ENCODE measurements at regions of chr14 and their contacts with region 1.

Region 1: GRCh38 chr14:90399541-90400444 is 3.0 kb downstream of the CALM1 start:
- DNase-seq: peak; percentile 93 to 98
- ATAC-seq: peak; percentile 73 to 79
- H3K4me3 ChIP-seq: peak overlapping the region; percentile 88; the same call in 1 of the 3 replicates
- H3K27ac ChIP-seq: peak overlapping the region in 1 of 2 experiments; percentile 18; a peak in 1 of 6 replicates
- H3K4me1 ChIP-seq: peaks cover 31% of the 10 kb centered on the region
- CTCF ChIP-seq: peak; percentile 99
- EP300 ChIP-seq: no peak
- POLR2A ChIP-seq: no peak
- RAD21 ChIP-seq: peak; percentile 88 to 89

Region 2: DNA sequence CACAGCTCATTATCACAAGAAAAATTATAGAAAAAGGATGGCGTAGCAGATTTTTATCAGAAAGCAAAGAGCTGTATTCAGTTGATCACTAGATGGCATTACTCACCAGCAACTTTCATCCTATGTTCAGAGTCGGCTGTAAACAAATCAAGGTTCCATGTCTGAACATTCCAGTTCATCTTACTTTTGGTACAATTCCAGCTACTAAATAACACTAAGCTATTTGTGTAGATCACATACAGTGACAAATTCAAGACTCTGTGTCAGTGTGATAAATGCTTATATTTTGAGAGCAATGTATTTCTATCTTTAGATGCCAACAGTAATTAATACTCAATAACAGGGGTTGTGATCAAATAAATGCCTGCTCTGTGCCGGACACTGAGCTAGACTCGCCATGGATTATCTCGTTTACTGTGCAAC is 98.1 kb before region 1 on chr14:
- CTCF ChIA-PET with region 1: interaction called, 7 read pairs
- POLR2A ChIA-PET with region 1: interaction called, 12 read pairs
- DNase-seq: peak; percentile 38 to 62
- ATAC-seq: peak; percentile 72 to 84; a peak in 4 of 6 replicates
- H3K4me3 ChIP-seq: no peak overlapping the region
- H3K27ac ChIP-seq: no peak overlapping the region
- H3K4me1 ChIP-seq: no peaks in the 10 kb centered on the region
- CTCF ChIP-seq: peak; percentile 66
- EP300 ChIP-seq: no peak
- POLR2A ChIP-seq: no peak
- RAD21 ChIP-seq: peak; percentile 71 to 79

Region 3: GRCh38 chr14:90383075-90383730 is 16.6 kb before region 1 on chr14:
- CTCF ChIA-PET with region 1: interaction called, 6 read pairs
- POLR2A ChIA-PET with region 1: interaction called, 69 read pairs
- DNase-seq: peak; percentile 97 to 100
- ATAC-seq: peak; percentile 97 to 98
- H3K4me3 ChIP-seq: peak overlapping the region; percentile 68
- H3K27ac ChIP-seq: peak overlapping the region; percentile 96 to 97
- H3K4me1 ChIP-seq: peaks cover 16% of the 10 kb centered on the region
- CTCF ChIP-seq: no peak; the same call in 2 of the 3 replicates
- EP300 ChIP-seq: no peak
- POLR2A ChIP-seq: peak; percentile 85
- RAD21 ChIP-seq: no peak; a peak in 1 of 5 replicates

Region 4: GRCh38 chr14:90388437-90388836 is 11.4 kb before region 1 on chr14:
- CTCF ChIA-PET with region 1: interaction called, 6 read pairs
- POLR2A ChIA-PET with region 1: interaction called, 69 read pairs
- DNase-seq: peak; percentile 52 to 79
- ATAC-seq: peak; percentile 78 to 79
- H3K4me3 ChIP-seq: no peak overlapping the region
- H3K27ac ChIP-seq: peak overlapping the region; percentile 51 to 79
- H3K4me1 ChIP-seq: peaks cover 21% of the 10 kb centered on the region
- CTCF ChIP-seq: no peak
- EP300 ChIP-seq: no peak
- POLR2A ChIP-seq: no peak
- RAD21 ChIP-seq: no peak

Region 5: GRCh38 chr14:90419200-90419599 is 19.4 kb after region 1 on chr14:
- CTCF ChIA-PET with region 1: interaction called, 19 read pairs
- POLR2A ChIA-PET with region 1: interaction called, 12 read pairs
- DNase-seq: peak; percentile 35 to 80
- ATAC-seq: peak; percentile 82 to 86
- H3K4me3 ChIP-seq: no peak overlapping the region
- H3K27ac ChIP-seq: peak overlapping the region in 1 of 2 experiments; percentile 57; a peak in 3 of 6 replicates
- H3K4me1 ChIP-seq: peaks cover 12% of the 10 kb centered on the region
- CTCF ChIP-seq: no peak
- EP300 ChIP-seq: no peak
- POLR2A ChIP-seq: no peak
- RAD21 ChIP-seq: no peak

Region 6: DNA sequence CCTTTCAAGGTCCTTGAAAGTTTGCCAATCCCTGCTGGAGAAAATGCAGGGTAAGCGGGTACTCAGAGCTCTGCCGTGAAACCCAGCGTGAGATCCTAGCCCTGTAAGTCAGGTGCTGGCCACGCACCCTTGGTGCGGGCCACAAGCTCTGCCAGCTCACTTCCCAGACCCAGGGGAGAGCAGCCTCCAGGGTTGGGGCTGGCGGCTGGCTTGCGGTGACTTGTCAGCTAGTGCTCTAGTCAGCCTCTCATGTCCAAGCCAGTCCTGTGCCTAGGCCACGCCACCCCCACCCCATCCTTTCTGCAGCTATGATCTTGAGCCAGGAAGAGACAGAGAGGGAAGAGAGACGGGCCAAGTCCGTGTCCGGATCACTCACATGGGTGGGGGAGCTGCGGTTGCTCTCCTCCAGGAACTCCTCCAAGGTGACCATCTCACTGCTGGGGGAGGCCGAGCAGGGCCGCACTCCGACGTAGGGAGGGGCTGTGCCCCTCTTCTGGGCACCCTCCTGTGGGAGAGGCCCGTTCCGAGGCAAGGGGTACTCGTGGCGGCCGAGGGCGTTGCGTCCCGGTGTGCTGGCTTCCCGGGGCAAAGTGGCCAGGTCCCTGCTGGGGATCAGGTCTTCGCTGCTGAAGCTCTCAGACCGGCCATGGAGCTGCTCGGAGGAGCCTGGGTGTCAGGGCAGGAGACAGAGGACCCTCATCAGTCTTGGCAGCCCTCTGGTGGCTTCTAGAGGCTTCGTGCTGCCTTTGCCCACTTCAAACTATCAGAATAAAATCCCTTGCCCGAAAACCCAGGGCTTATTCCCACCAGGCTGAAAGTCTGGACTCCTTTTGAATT is 878.0 kb after region 1 on chr14:
- CTCF ChIA-PET with region 1: no interaction called
- POLR2A ChIA-PET with region 1: no interaction called
- DNase-seq: no peak
- ATAC-seq: no peak
- H3K4me3 ChIP-seq: no peak overlapping the region
- H3K27ac ChIP-seq: no peak overlapping the region
- H3K4me1 ChIP-seq: no peaks in the 10 kb centered on the region
- CTCF ChIP-seq: no peak
- EP300 ChIP-seq: no peak
- POLR2A ChIP-seq: no peak
- RAD21 ChIP-seq: no peak